ENCODE measurements at regions of chr2 and their contacts with region 1.

Region 1: DNA sequence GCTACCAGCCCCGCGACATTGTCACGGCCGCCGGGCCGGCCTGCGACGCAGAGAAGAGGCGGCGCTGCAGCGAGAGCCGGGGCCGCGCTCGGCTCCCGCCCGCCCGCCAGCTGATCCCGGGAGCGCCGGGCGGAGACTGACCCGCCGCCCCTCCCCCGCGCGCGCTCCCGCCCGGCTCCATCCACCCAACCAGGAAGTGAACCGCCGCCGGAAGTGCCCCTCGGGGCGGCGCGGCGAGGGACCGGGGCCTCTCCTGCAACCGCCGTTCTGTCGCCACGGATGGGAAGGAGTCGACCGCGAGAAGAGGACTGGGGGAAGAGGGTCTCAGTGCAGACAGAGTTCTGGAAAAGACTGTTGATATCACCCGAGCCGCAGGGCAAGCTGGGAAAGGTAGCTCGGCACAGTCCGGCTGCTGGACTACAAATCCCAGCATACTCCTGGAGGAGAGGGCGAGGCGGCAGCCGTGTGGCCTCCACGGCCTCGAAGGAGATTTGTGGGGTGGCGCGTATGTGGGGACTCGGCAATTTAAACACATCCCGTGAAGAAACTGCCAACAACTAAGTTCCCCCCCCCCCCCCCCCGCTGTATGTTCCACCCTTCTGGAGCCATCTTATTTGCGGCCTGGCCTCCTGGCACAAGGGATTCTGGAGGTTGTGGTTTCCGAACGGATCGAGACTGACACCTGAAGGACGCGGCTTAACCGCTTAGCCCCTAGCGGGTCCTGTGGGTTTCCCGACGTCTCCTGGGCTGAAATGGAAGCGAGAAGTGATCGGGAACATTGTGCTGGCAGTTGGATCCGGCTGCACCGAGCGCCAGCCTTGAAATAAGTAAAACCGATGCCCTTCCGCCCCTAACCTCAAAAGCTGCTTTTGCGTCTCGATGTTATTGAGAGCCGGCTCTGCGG is at the start of gene AAK1:
- DNase-seq: peak; percentile 89
- H3K4me3 Mint-ChIP-seq: peak within 1 kb of the TSS; percentile 94
- H3K27ac Mint-ChIP-seq: peak within 1 kb of the TSS; percentile 75
- H3K4me1 Mint-ChIP-seq: peaks cover 48% of the 10 kb centered on the region
- H3K27me3 Mint-ChIP-seq: no peaks in the 10 kb centered on the region
- CTCF ChIP-seq: no peak
- total RNA-seq, gene AAK1: 46.7 and 60.1 TPM in 2 replicates

Region 2: GRCh38 chr2:69565431-69565839 is 78.4 kb before region 1 on chr2:
- CTCF ChIA-PET with region 1: interaction called, 4 read pairs
- intact Hi-C with region 1: loop called (anchors 5 kb)
- DNase-seq: peak; percentile 67
- H3K4me3 Mint-ChIP-seq: no peak overlapping the region
- H3K27ac Mint-ChIP-seq: no peak overlapping the region
- H3K4me1 Mint-ChIP-seq: peaks cover 38% of the 10 kb centered on the region
- H3K27me3 Mint-ChIP-seq: no peaks in the 10 kb centered on the region
- CTCF ChIP-seq: peak; percentile 68

Region 3: GRCh38 chr2:69601179-69601612 is 42.7 kb before region 1 on chr2:
- CTCF ChIA-PET with region 1: interaction called, 3 read pairs
- intact Hi-C with region 1: loop called (anchors 5 kb)
- DNase-seq: no peak
- H3K4me3 Mint-ChIP-seq: no peak overlapping the region
- H3K27ac Mint-ChIP-seq: no peak overlapping the region
- H3K4me1 Mint-ChIP-seq: peaks cover 53% of the 10 kb centered on the region
- H3K27me3 Mint-ChIP-seq: no peaks in the 10 kb centered on the region
- CTCF ChIP-seq: no peak

Region 4: GRCh38 chr2:69714024-69714423 is 70.2 kb after region 1 on chr2:
- CTCF ChIA-PET with region 1: no interaction called
- intact Hi-C with region 1: loop called (anchors 5 kb)
- DNase-seq: no peak
- H3K4me3 Mint-ChIP-seq: no peak overlapping the region
- H3K27ac Mint-ChIP-seq: no peak overlapping the region
- H3K4me1 Mint-ChIP-seq: no peaks in the 10 kb centered on the region
- H3K27me3 Mint-ChIP-seq: peaks cover 13% of the 10 kb centered on the region
- CTCF ChIP-seq: no peak

Measured in Calu3 (cell line).